Mammary epithelial cell (primary cell): ENCODE measurements at regions of chr7 and their contacts with region 1.

Region 1: DNA sequence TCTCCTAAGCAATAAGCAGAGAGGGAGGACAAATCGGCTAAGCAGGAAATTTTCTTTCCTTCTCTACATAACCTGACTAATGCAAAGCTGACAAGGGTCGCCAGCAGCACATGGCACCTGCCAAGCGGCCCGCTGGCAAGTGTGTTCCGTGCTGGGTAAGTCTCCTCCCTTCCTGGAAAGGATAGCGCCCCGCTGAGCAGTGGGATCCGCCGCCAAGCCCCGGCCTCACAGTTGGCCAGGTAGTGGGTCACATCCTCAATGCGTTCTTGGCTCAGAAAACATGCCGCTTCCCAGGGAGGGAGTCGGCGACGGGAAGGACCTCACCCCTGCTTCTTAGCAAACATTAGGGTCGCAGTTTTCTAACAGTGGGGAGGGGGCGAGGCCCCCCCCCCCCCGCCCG is 488.9 kb upstream of the NUPR2 start:
- DNase-seq: no peak
- H3K4me3 ChIP-seq: no peak overlapping the region
- H3K27ac ChIP-seq: no peak overlapping the region
- H3K4me1 ChIP-seq: no peaks in the 10 kb centered on the region
- H3K27me3 ChIP-seq: no peaks in the 10 kb centered on the region
- CTCF ChIP-seq: no peak

Region 2: GRCh38 chr7:56495165-56495564 is 110.0 kb before region 1 on chr7:
- CTCF ChIA-PET with region 1: no interaction called
- dilution Hi-C with region 1: no loop called
- in situ Hi-C with region 1: loop called in 1 of 2 experiments (anchors 25 kb)
- intact Hi-C with region 1: no loop called
- DNase-seq: no peak
- H3K4me3 ChIP-seq: no peak overlapping the region
- H3K27ac ChIP-seq: no peak overlapping the region
- H3K4me1 ChIP-seq: no peaks in the 10 kb centered on the region
- H3K27me3 ChIP-seq: no peaks in the 10 kb centered on the region
- CTCF ChIP-seq: no peak